Activated CD8-positive, alpha-beta T cell treated with anti-CD3 and anti-CD28 coated beads for 36 hours (primary cell): ENCODE measurements at regions of chr5 and their contacts with region 1.

Region 1: DNA sequence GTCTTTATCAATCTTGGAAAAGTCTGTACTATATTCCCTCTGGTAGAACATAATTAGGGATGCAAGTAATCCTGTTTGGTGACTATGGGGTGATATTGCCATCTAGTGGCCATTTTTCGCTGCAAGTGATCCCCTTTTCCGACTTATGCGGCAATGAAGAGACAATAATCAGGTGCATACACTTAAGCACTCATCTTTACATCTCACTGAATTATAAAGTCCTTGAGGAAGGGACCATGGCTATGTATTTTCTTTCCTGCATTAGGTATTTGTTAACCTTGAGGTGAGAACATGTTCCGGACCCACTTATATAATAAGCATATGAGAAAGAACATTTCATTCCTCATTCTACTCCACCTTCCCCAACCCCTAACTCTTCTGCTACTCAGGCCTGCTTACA is 19.6 kb upstream of the LIX1 start:
- DNase-seq: peak; percentile 70
- ATAC-seq: peak; percentile 35
- H3K4me3 Mint-ChIP-seq: no peak overlapping the region
- H3K27ac Mint-ChIP-seq: no peak overlapping the region
- H3K4me1 Mint-ChIP-seq: peaks cover 15% of the 10 kb centered on the region
- H3K27me3 Mint-ChIP-seq: no peaks in the 10 kb centered on the region
- CTCF ChIP-seq: peak; percentile 95

Region 2: DNA sequence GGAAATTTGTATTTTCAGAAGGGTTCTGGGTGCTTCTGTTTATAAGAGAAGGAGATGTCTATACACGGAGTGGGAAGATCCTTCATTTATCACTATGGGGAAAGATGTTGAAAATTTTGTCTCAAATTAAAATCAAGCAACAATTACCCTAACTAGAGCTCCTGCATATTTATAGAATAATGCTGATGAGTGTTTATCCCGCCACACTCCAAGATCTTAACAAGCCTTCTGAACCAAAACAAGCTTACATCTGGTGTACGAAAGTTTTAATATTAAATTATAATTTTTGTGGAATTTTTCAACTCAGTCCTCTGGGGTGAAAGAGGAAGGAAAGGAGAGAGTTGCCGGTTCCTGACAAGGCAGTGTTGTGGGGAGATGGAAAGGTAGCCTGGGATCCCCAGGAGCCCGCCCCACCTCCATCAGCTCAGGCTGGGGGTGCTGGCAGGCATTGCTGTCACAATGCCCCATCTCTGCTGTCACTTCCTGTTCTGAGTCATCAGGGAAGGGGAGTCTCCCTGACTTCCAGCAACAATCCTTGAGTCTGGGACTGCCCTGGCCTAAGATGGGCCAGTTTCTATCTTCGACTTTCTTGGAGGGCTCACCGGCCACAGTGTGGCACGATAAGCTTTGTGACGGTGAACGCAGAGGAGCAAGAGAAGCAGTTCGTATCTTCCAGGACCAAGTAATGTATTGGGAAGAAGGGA is 418.8 kb before region 1 on chr5:
- CTCF ChIA-PET with region 1: interaction called, 12 read pairs
- POLR2A ChIA-PET with region 1: no interaction called
- intact Hi-C with region 1: no loop called
- DNase-seq: no peak
- ATAC-seq: no peak
- H3K4me3 Mint-ChIP-seq: no peak overlapping the region
- H3K27ac Mint-ChIP-seq: peak overlapping the region; percentile 69
- H3K4me1 Mint-ChIP-seq: peaks cover 37% of the 10 kb centered on the region
- H3K27me3 Mint-ChIP-seq: no peaks in the 10 kb centered on the region
- CTCF ChIP-seq: no peak

Region 3: DNA sequence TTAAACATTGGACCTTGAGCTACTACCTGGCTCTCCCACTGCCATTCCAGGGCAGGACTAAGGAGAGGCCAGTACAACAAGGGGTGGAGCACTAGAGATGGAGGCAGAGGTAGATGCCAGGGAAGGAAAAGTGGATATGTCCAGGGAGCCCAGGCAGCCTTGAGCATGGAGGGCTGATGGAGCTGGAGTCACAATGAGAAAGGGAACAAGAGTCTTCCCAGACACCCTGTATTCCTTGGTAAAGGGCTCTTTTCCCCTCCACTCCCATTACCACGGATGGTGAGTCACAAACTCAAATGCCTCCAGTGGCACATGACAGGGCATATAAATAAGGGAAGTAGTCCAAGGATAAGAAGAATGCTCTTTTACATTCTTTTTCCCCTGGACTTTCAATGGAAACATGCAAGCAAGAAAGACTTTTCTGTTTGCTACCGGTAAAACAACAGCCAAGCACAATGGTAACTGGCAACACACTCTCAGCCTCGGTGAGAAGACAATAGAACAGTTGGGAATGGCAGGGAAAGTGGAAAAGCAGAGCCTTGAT is 371.0 kb before region 1 on chr5:
- CTCF ChIA-PET with region 1: interaction called, 14 read pairs
- POLR2A ChIA-PET with region 1: no interaction called
- intact Hi-C with region 1: no loop called
- DNase-seq: no peak
- ATAC-seq: no peak
- H3K4me3 Mint-ChIP-seq: no peak overlapping the region
- H3K27ac Mint-ChIP-seq: peak overlapping the region; percentile 62
- H3K4me1 Mint-ChIP-seq: peaks cover 26% of the 10 kb centered on the region
- H3K27me3 Mint-ChIP-seq: no peaks in the 10 kb centered on the region
- CTCF ChIP-seq: no peak

Region 4: GRCh38 chr5:96997265-96997859 is 164.7 kb before region 1 on chr5:
- CTCF ChIA-PET with region 1: interaction called, 66 read pairs
- POLR2A ChIA-PET with region 1: no interaction called
- intact Hi-C with region 1: loop called (anchors 5 kb)
- DNase-seq: peak; percentile 49
- ATAC-seq: peak; percentile 77
- H3K4me3 Mint-ChIP-seq: no peak overlapping the region
- H3K27ac Mint-ChIP-seq: no peak overlapping the region
- H3K4me1 Mint-ChIP-seq: peaks cover 31% of the 10 kb centered on the region
- H3K27me3 Mint-ChIP-seq: no peaks in the 10 kb centered on the region
- CTCF ChIP-seq: peak; percentile 60

Region 5: GRCh38 chr5:97049175-97049574 is 112.9 kb before region 1 on chr5:
- CTCF ChIA-PET with region 1: interaction called, 20 read pairs
- POLR2A ChIA-PET with region 1: no interaction called
- intact Hi-C with region 1: no loop called
- DNase-seq: no peak
- ATAC-seq: no peak
- H3K4me3 Mint-ChIP-seq: no peak overlapping the region
- H3K27ac Mint-ChIP-seq: no peak overlapping the region
- H3K4me1 Mint-ChIP-seq: no peaks in the 10 kb centered on the region
- H3K27me3 Mint-ChIP-seq: peaks cover 3% of the 10 kb centered on the region
- CTCF ChIP-seq: no peak

Region 6: DNA sequence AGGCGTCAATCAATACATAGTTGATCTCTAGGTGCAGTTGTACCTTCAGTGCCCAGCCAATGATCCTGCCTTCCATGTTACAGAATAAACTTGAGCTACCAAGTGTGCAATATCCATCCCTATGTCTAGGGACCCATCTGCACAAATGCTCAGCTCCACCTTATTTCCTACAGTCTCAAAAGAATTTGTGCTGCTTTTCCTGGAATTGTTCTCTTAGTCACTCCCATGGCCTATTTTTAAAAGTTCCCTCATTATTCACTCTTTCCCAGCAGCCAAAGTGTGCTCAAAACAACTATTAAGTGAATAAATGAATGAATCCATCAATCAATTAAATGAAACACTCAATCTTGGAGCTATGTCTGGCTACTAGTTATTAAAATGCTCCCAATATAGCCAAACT is 34.3 kb before region 1 on chr5:
- CTCF ChIA-PET with region 1: interaction called, 11 read pairs
- POLR2A ChIA-PET with region 1: no interaction called
- intact Hi-C with region 1: no loop called
- DNase-seq: no peak
- ATAC-seq: no peak
- H3K4me3 Mint-ChIP-seq: no peak overlapping the region
- H3K27ac Mint-ChIP-seq: no peak overlapping the region
- H3K4me1 Mint-ChIP-seq: no peaks in the 10 kb centered on the region
- H3K27me3 Mint-ChIP-seq: peaks cover 6% of the 10 kb centered on the region
- CTCF ChIP-seq: no peak

Region 7: DNA sequence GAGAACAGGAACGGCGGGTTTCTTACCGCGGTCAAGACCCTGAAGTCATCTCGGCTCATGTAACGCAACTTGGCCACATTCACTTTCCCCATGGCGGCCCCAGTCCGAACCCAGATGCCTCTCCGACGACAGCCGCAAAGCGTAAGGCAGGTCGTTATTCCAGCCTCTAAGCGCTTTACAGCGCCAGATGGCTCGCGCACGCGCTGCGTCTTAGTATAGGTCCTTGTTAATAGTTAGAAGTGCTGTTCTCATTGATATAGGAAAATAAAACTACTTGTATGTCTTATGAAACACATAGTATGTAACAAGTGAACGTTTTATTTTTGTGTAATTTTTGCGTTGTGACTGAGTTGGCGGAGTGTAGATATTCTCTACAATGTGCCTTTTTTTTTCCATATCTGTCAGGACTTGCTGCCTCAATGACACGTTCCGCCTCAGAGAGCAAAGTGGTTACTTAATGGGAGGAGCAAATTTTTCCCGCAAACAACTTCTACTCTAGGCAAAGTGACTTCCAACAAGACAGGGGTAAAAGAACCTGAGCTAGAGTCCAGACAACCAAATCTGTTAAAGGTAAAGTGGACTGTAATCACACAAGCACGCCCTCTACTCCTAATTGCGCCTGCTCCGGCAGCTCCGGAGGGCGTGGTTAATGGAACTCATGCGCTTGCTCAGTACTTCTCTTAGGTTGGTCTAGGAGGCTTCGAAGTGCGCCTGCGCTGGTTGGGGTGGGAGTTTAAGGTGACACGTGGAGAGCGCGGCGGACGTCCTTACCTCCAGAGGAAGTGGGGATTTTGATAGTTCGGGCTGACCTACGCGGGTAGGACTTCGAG is 21.3 kb after region 1 on chr5 and contains the start of gene RIOK2:
- CTCF ChIA-PET with region 1: interaction called, 12 read pairs
- POLR2A ChIA-PET with region 1: interaction called, 3 read pairs
- intact Hi-C with region 1: no loop called
- DNase-seq: peak; percentile 97
- ATAC-seq: peak; percentile 93
- H3K4me3 Mint-ChIP-seq: peak within 1 kb of the TSS; percentile 91
- H3K27ac Mint-ChIP-seq: peak within 1 kb of the TSS; percentile 100
- H3K4me1 Mint-ChIP-seq: peaks cover 32% of the 10 kb centered on the region
- H3K27me3 Mint-ChIP-seq: no peaks in the 10 kb centered on the region
- CTCF ChIP-seq: no peak
- total RNA-seq, gene RIOK2: 31.7 to 33.1 TPM

Region 8: DNA sequence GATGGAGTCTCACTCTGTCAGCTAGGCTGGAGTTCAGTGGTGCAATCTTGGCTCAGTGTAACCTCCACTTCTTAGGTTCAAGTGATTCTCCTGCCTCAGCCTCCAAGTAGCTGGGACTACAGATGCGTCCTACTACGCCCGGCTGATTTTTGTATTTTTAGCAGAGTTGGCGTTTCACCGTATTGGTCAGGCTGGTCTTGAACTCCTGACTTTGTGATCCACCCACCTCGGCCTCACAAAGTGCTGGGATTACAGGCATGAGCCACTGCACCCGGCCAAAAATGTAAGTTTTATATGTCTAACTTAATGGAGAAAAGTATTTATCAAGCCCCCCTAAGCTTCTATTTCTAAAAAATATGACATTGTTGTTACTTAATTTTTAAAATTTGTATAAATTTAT is 119.2 kb after region 1 on chr5:
- CTCF ChIA-PET with region 1: no interaction called
- POLR2A ChIA-PET with region 1: no interaction called
- intact Hi-C with region 1: no loop called
- DNase-seq: no peak
- ATAC-seq: no peak
- H3K4me3 Mint-ChIP-seq: no peak overlapping the region
- H3K27ac Mint-ChIP-seq: no peak overlapping the region
- H3K4me1 Mint-ChIP-seq: no peaks in the 10 kb centered on the region
- H3K27me3 Mint-ChIP-seq: no peaks in the 10 kb centered on the region
- CTCF ChIP-seq: no peak

Region 9: GRCh38 chr5:97406946-97407676 is 245.1 kb after region 1 on chr5:
- CTCF ChIA-PET with region 1: no interaction called
- POLR2A ChIA-PET with region 1: no interaction called
- intact Hi-C with region 1: no loop called
- DNase-seq: no peak
- ATAC-seq: no peak
- H3K4me3 Mint-ChIP-seq: no peak overlapping the region
- H3K27ac Mint-ChIP-seq: no peak overlapping the region
- H3K4me1 Mint-ChIP-seq: no peaks in the 10 kb centered on the region
- H3K27me3 Mint-ChIP-seq: no peaks in the 10 kb centered on the region
- CTCF ChIP-seq: no peak